Dendritic cell treated with granulocyte-macrophage colony-stimulating factor and Interleukin-4, amounts not matched to agents 40 ng/mL and 50 ng/mL, for 4 days (primary cell): ENCODE measurements at regions of chr20 and their contacts with region 1.

Region 1: DNA sequence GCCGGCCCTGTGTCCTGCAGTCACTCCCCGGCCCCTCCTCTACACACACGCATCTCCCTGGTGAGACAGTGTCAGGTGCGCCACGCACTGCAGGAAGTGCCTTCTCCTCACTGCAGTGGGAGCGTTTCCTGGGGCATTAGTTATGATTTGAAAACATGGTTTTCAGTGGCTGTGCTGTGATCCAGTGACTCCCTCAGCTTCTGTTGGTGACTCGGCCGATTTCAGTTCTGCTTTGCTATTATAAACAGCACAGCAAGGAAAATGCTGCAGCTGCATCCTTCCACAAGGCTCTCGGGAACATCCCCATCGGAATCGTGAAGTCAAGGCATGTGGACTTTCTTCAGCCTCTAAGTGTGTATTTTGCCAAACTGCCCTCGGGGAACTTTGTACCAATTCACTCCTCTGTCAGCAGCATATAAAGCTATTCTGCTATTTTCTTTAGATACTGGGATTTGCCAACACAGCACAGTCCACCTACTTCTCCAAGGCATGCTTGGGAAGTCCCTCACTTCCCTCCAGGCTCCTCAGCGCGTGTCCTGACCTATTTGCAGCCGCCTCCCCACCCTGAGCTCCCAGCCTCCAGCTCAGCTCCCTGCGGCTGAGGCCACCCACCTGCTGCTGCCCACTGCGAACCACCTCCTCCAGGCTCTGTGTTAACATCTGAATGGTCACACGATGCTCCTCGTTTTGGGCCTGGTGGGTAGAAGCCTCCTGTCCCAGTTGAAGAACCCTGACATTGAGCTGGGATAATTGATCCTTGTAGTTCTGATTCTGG is 54.5 kb downstream of the GINS1 start:
- H3K4me3 Mint-ChIP-seq: peak overlapping the region; percentile 51
- H3K27ac Mint-ChIP-seq: peak overlapping the region; percentile 89
- H3K4me1 Mint-ChIP-seq: peaks cover 55% of the 10 kb centered on the region
- H3K27me3 Mint-ChIP-seq: peaks cover 3% of the 10 kb centered on the region

Region 2: GRCh38 chr20:25310268-25310920 is 151.6 kb before region 1 on chr20:
- intact Hi-C with region 1: loop called (anchors 10 kb)
- H3K4me3 Mint-ChIP-seq: peak overlapping the region; percentile 77
- H3K27ac Mint-ChIP-seq: peak overlapping the region; percentile 96
- H3K4me1 Mint-ChIP-seq: peaks cover 69% of the 10 kb centered on the region
- H3K27me3 Mint-ChIP-seq: no peaks in the 10 kb centered on the region

Region 3: GRCh38 chr20:25418776-25419175 is 43.2 kb before region 1 on chr20:
- intact Hi-C with region 1: no loop called
- H3K4me3 Mint-ChIP-seq: no peak overlapping the region
- H3K27ac Mint-ChIP-seq: no peak overlapping the region
- H3K4me1 Mint-ChIP-seq: no peaks in the 10 kb centered on the region
- H3K27me3 Mint-ChIP-seq: no peaks in the 10 kb centered on the region